SK-N-SH (cell line): ENCODE measurements at regions of chr2 and their contacts with region 1.

Region 1: GRCh38 chr2:121076885-121077549 is 208.0 kb downstream of the TFCP2L1 start:
- DNase-seq: peak; percentile 67
- H3K4me3 ChIP-seq: no peak overlapping the region
- H3K27ac ChIP-seq: no peak overlapping the region
- H3K4me1 ChIP-seq: peaks cover 0 to 19% of the 10 kb centered on the region in 2 experiments; a peak in 1 of 4 replicates
- H3K27me3 ChIP-seq: no peaks in the 10 kb centered on the region
- CTCF ChIP-seq: peak; percentile 78
- EP300 ChIP-seq: no peak
- RAD21 ChIP-seq: no peak

Region 2: GRCh38 chr2:120680136-120680761 is 396.8 kb before region 1 on chr2:
- CTCF ChIA-PET with region 1: interaction called, 124 read pairs
- POLR2A ChIA-PET with region 1: no interaction called
- DNase-seq: peak; percentile 83
- H3K4me3 ChIP-seq: peak overlapping the region in 1 of 2 experiments; percentile 24; a peak in 1 of 4 replicates
- H3K27ac ChIP-seq: no peak overlapping the region
- H3K4me1 ChIP-seq: peaks cover 0 to 10% of the 10 kb centered on the region in 2 experiments; a peak in 2 of 4 replicates
- H3K27me3 ChIP-seq: peaks cover 14% of the 10 kb centered on the region; the same call in 1 of the 2 replicates
- CTCF ChIP-seq: peak; percentile 58
- EP300 ChIP-seq: no peak
- RAD21 ChIP-seq: peak; percentile 86

Region 3: GRCh38 chr2:120712180-120712681 is 364.8 kb before region 1 on chr2:
- CTCF ChIA-PET with region 1: interaction called, 18 read pairs
- POLR2A ChIA-PET with region 1: no interaction called
- DNase-seq: peak; percentile 46
- H3K4me3 ChIP-seq: no peak overlapping the region
- H3K27ac ChIP-seq: no peak overlapping the region
- H3K4me1 ChIP-seq: peaks cover 0 to 28% of the 10 kb centered on the region in 2 experiments; a peak in 1 of 4 replicates
- H3K27me3 ChIP-seq: no peaks in the 10 kb centered on the region
- CTCF ChIP-seq: no peak
- EP300 ChIP-seq: peak in 1 of 2 experiments; percentile 59; a peak in 2 of 4 replicates
- RAD21 ChIP-seq: no peak

Region 4: DNA sequence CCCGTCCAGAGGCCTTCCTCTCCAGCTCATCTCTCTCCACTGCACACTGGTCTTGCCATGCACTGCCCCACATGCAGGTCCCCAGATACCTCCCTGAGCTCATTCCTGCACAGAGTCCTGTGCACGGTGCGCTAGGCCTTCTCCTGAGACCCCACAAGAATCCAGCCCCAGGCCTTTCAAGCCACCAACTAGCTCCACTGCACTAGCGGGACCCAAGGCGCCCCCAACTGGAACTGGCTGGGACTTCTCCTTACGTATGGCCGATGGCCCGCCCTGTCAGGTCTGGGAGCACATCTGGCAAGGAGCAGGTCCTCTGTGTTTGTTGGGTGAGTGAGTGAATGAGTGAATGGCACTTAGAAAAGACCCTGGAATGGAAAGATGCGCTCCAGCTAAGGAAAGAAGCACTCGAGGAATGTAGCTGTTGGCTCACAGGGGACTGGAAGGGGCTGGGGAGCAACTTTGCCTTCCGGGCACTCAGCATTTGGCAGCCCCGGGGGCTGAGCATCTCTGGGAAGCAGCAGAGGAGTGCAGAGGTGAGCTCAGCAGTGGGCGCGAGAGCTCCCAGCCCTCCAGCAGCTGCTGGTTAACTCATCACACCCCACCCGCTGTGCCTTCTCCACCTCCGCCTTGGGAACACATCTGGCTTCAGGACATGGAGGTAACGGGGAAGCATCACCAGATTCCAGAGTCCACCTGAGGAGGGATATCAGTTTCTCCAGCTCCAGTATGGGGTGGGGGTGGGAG is 118.2 kb before region 1 on chr2:
- CTCF ChIA-PET with region 1: interaction called, 10 read pairs
- POLR2A ChIA-PET with region 1: no interaction called
- DNase-seq: peak; percentile 66
- H3K4me3 ChIP-seq: no peak overlapping the region
- H3K27ac ChIP-seq: peak overlapping the region in 1 of 2 experiments; percentile 36; a peak in 1 of 4 replicates
- H3K4me1 ChIP-seq: peaks cover 0 to 44% of the 10 kb centered on the region in 2 experiments; a peak in 1 of 4 replicates
- H3K27me3 ChIP-seq: no peaks in the 10 kb centered on the region
- CTCF ChIP-seq: peak; percentile 52
- EP300 ChIP-seq: no peak
- RAD21 ChIP-seq: peak; percentile 37; the same call in 1 of the 2 replicates

Region 5: GRCh38 chr2:120991441-120991840 is 85.6 kb before region 1 on chr2:
- CTCF ChIA-PET with region 1: no interaction called
- POLR2A ChIA-PET with region 1: no interaction called
- DNase-seq: no peak
- H3K4me3 ChIP-seq: no peak overlapping the region
- H3K27ac ChIP-seq: no peak overlapping the region
- H3K4me1 ChIP-seq: no peaks in the 10 kb centered on the region
- H3K27me3 ChIP-seq: no peaks in the 10 kb centered on the region
- CTCF ChIP-seq: no peak
- EP300 ChIP-seq: no peak
- RAD21 ChIP-seq: no peak

Region 6: GRCh38 chr2:121088251-121089165 is 11.5 kb after region 1 on chr2:
- CTCF ChIA-PET with region 1: interaction called, 32 read pairs
- POLR2A ChIA-PET with region 1: no interaction called
- DNase-seq: no peak
- H3K4me3 ChIP-seq: no peak overlapping the region
- H3K27ac ChIP-seq: no peak overlapping the region
- H3K4me1 ChIP-seq: no peaks in the 10 kb centered on the region; a peak in 1 of 4 replicates
- H3K27me3 ChIP-seq: no peaks in the 10 kb centered on the region
- CTCF ChIP-seq: no peak
- EP300 ChIP-seq: no peak
- RAD21 ChIP-seq: no peak

Region 7: GRCh38 chr2:121356058-121356640 is 279.1 kb after region 1 on chr2:
- CTCF ChIA-PET with region 1: interaction called, 63 read pairs
- POLR2A ChIA-PET with region 1: no interaction called
- DNase-seq: peak; percentile 63
- H3K4me3 ChIP-seq: peak overlapping the region in 1 of 2 experiments; percentile 33; a peak in 1 of 4 replicates
- H3K27ac ChIP-seq: no peak overlapping the region
- H3K4me1 ChIP-seq: peaks cover 15 to 17% of the 10 kb centered on the region in 2 experiments; a peak in 3 of 4 replicates
- H3K27me3 ChIP-seq: no peaks in the 10 kb centered on the region
- CTCF ChIP-seq: peak; percentile 81
- EP300 ChIP-seq: no peak
- RAD21 ChIP-seq: peak; percentile 75